Ascending aorta (tissue), 2 donors: ENCODE measurements at regions of chr3 and their contacts with region 1.

Region 1: DNA sequence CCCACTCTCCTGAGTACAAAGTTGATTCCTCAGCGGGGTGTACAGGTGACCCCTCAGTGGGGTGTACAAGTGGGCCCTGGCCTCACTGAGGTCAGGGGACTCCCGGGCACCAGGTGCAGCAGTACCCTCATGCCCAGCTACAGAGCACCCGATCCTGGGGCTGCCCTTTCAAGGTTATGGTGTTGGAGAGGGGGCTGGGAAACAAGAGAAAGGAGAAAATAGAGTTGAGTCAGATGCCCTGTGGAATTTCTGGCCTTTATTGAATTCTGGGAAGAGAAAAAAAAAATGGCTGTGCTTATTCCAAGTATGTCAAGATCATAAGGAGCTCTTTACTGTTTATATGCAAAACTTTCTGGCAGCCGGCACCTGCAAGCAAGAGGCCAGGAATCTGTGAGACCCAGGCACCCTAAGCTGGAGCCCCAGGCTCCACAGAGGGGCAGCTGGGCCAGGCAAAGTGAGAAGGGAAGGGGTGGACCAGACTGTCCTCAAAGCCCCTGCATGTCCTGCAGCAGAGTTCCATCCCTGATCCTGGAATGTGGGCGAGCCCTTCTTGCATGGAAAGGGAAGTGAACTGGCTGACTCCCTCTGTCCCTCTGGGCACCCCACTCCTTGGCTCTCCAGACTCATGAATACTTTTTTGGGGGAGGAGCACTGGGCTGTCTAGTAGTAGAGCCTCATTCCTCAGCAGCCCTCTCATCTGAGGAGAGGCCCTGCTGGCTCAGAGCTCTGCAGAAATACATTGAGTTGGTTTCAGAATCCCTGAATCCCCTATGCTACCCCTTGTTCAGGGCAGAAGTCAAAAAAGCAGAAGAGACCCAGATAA is 43.0 kb downstream of the AMOTL2 start:
- DNase-seq: no peak
- H3K4me3 ChIP-seq: no peak overlapping the region
- H3K27ac ChIP-seq: peak overlapping the region; percentile 87
- H3K4me1 ChIP-seq: peaks cover 34 to 81% of the 10 kb centered on the region in 2 donors
- H3K27me3 ChIP-seq: no peaks in the 10 kb centered on the region
- CTCF ChIP-seq: no peak

Region 2: GRCh38 chr3:134315286-134316106 is 15.7 kb before region 1 on chr3:
- intact Hi-C with region 1: loop called (anchors 1 kb)
- DNase-seq: peak; percentile 72 to 93
- H3K4me3 ChIP-seq: no peak overlapping the region
- H3K27ac ChIP-seq: peak overlapping the region; percentile 94 to 97
- H3K4me1 ChIP-seq: peaks cover 30 to 66% of the 10 kb centered on the region in 2 donors
- H3K27me3 ChIP-seq: no peaks in the 10 kb centered on the region
- CTCF ChIP-seq: no peak

Region 3: GRCh38 chr3:134364061-134364935 is 33.1 kb after region 1 on chr3:
- intact Hi-C with region 1: no loop called
- DNase-seq: peak; percentile 75 to 98
- H3K4me3 ChIP-seq: peak overlapping the region; percentile 24 to 44
- H3K27ac ChIP-seq: peak overlapping the region; percentile 92 to 93
- H3K4me1 ChIP-seq: peaks cover 28 to 97% of the 10 kb centered on the region in 2 donors
- H3K27me3 ChIP-seq: no peaks in the 10 kb centered on the region
- CTCF ChIP-seq: no peak

Region 4: GRCh38 chr3:134453631-134454030 is 122.4 kb after region 1 on chr3:
- intact Hi-C with region 1: no loop called
- DNase-seq: no peak
- H3K4me3 ChIP-seq: no peak overlapping the region
- H3K27ac ChIP-seq: no peak overlapping the region
- H3K4me1 ChIP-seq: no peaks in the 10 kb centered on the region
- H3K27me3 ChIP-seq: no peaks in the 10 kb centered on the region
- CTCF ChIP-seq: no peak